Breast epithelium (tissue), 4 donors: ENCODE measurements at regions of chr1 and their contacts with region 1.

Region 1: DNA sequence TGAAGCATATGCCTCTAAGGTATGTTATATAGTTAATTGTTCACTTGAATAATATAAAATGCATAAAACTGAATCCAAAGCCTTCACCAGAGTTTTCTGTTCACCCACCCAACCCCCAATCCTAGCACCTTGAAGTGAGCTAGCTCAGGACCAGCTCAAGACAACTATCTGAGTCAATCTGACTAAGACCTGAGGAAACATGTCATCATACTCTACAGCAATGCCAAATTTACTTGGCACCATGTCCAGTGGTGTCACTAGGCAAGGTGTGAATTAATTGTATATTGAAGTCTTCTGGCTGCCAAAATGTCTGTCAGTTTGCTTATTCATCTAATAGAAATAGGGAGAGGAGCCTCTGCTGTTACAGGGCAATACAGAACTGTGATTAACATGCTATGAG is 3.8 kb downstream of the DNASE2B start:
- DNase-seq: no peak
- H3K4me3 ChIP-seq: no peak overlapping the region
- H3K27ac ChIP-seq: no peak overlapping the region
- H3K4me1 ChIP-seq: no peaks in the 10 kb centered on the region
- H3K27me3 ChIP-seq: no peaks in the 10 kb centered on the region
- CTCF ChIP-seq: no peak
- POLR2A ChIP-seq: no peak

Region 2: GRCh38 chr1:84377480-84378095 is 24.5 kb before region 1 on chr1:
- intact Hi-C with region 1: no loop called
- DNase-seq: no peak
- H3K4me3 ChIP-seq: no peak overlapping the region
- H3K27ac ChIP-seq: peak overlapping the region in 1 of 2 donors; percentile 76
- H3K4me1 ChIP-seq: no peaks in the 10 kb centered on the region
- H3K27me3 ChIP-seq: no peaks in the 10 kb centered on the region
- CTCF ChIP-seq: no peak
- POLR2A ChIP-seq: no peak

Region 3: DNA sequence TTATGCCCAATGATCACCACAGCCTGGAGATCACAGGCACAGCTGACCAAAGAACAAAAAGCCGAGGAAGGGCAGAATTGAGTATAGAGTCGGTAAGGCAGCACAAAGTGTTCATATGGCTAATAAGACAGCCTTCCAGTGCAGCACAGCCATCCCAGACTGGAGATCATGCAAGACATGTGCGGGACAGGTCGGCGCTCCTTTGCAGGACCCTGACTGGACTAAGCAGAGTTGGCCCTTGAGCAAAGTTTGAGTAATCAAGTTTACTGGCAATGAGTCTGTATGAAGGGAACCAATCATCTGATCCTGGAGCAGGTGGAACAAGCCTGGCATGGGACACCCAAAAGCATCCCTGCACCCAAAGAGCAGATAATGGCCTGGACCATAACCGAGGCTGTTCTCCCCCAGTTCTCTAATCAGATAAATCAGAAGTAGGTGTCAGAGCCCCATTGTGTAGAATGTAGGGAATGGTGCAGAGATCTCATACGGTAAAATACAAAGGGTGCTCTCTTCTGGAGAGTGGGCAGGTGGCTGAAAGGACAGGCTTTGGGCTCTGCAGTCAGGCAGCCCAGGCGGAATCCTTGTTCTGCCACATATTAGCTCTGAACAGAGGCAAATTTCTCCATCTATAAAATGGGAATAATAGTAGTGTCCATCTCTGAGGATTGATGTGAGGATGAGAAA is 14.4 kb before region 1 on chr1:
- intact Hi-C with region 1: loop called (anchors 1 kb)
- DNase-seq: no peak
- H3K4me3 ChIP-seq: no peak overlapping the region
- H3K27ac ChIP-seq: no peak overlapping the region
- H3K4me1 ChIP-seq: no peaks in the 10 kb centered on the region
- H3K27me3 ChIP-seq: no peaks in the 10 kb centered on the region
- CTCF ChIP-seq: no peak
- POLR2A ChIP-seq: no peak